CD8-positive, alpha-beta T cell (primary cell): ENCODE measurements at regions of chr19 and their contacts with region 1.

Region 1: DNA sequence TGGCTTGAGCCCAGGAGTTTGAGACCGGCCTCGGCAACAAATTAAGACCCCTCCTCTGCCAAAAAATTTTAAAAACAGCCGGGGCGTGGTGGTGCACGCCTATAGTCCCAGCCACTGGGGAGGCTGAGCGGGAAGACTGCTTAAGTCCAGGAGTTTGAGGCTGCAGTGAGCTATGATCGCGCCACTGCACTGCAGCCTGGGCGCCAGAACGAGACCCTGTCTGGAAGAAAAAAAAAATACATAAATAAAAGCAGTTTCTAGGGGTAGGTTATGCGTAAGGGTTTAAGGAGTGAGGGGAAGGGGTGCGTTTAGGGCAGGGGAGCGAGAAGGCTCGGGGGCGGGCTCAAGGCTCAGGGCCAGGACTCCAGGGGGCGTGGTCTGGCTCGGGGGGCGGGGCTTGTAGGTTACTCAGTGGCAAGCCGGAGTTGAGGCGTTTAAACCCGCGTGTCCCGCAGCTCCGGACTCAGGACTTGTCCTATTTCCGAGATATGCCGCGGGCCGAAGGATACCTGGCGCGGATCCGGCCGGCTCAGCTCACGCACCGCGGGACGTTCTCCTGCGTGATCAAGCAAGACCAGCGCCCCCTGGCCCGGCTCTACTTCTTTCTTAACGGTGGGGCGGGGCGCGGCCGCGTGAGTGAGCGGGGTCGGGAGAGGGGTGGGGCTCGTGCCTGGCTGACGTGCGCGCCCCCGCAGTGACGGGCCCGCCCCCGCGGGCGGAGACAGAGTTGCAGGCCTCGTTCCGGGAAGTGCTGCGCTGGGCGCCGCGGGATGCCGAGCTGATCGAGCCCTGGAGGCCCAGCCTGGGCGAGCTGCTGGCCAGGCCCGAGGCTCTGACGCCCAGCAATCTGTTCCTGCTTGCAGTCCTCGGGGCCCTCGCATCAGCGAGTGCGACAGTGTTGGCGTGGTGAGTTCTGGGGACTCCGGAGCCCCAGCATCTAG is 10.7 kb downstream of the SPACA6 start:
- DNase-seq: peak; percentile 91 to 99 (median 97)
- ATAC-seq: peak; percentile 91
- H3K4me3 ChIP-seq: peak overlapping the region; percentile 89 to 98
- H3K4me3 Mint-ChIP-seq: peak overlapping the region; percentile 89
- H3K27ac ChIP-seq: peak overlapping the region; percentile 88 to 92
- H3K27ac Mint-ChIP-seq: peak overlapping the region; percentile 89
- H3K4me1 ChIP-seq: peaks cover 25% of the 10 kb centered on the region
- H3K4me1 Mint-ChIP-seq: peaks cover 35% of the 10 kb centered on the region
- H3K27me3 ChIP-seq: no peaks in the 10 kb centered on the region
- H3K27me3 Mint-ChIP-seq: no peaks in the 10 kb centered on the region
- CTCF ChIP-seq: peak; percentile 56

Region 2: DNA sequence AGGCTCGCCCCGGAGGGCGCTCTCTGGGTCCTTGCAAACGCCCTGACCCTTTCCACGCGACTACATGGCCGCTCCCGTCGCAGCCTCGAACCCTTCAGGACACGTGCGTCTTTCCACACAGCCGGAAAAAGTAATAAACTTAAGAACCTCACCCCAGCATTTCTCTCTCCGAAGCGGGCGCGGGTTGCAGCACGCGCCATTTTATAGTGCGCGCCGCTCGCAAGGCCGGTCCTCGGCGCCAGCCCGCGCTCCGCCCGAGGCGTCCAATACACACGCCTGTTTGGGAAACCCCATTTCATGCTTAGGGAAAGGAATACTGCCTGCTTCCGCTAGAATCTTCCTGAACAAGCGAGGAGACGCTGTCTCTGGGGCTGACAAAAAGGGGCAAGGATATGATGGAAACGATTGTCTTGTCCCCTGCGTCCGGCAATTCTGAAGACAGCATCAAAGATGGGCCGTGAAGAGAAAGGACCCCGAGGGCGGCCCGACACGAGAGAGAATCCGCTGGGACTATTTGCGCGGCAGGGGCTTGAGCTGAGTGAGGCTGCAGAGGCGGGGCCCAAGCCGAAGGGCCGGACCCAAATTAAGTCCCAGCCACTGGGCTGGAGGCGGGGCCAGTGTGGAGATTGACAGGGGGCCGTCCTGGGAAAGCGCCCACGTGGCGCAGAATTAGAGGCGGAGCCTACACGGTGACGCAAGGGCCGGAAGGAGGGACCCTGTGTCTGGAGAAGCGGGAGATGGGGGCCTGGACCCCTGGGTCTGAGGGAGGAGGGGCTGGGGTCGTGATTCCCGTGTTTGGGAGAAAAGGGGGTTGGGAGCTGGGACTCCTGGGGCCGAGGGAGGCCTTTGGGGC is 899.2 kb before region 1 on chr19:
- CTCF ChIA-PET with region 1: no interaction called
- POLR2A ChIA-PET with region 1: no interaction called
- intact Hi-C with region 1: loop called in 1 of 2 experiments (anchors 10 kb)
- DNase-seq: peak; percentile 91 to 99 (median 96)
- ATAC-seq: peak; percentile 95
- H3K4me3 ChIP-seq: peak overlapping the region; percentile 91 to 96
- H3K4me3 Mint-ChIP-seq: peak overlapping the region; percentile 98
- H3K27ac ChIP-seq: peak overlapping the region; percentile 99
- H3K27ac Mint-ChIP-seq: peak overlapping the region; percentile 100
- H3K4me1 ChIP-seq: peaks cover 18% of the 10 kb centered on the region
- H3K4me1 Mint-ChIP-seq: peaks cover 43% of the 10 kb centered on the region
- H3K27me3 ChIP-seq: no peaks in the 10 kb centered on the region
- H3K27me3 Mint-ChIP-seq: no peaks in the 10 kb centered on the region
- CTCF ChIP-seq: no peak

Region 3: GRCh38 chr19:51570962-51571575 is 132.8 kb before region 1 on chr19 and contains the start of gene ZNF175:
- CTCF ChIA-PET with region 1: no interaction called
- POLR2A ChIA-PET with region 1: no interaction called
- intact Hi-C with region 1: loop called (anchors 1 to 5 kb)
- DNase-seq: peak; percentile 70 to 94 (median 87)
- ATAC-seq: peak; percentile 98
- H3K4me3 ChIP-seq: peak within 1 kb of the TSS; percentile 65 to 80
- H3K4me3 Mint-ChIP-seq: peak within 1 kb of the TSS; percentile 97
- H3K27ac ChIP-seq: no peak within 1 kb of the TSS
- H3K27ac Mint-ChIP-seq: peak within 1 kb of the TSS; percentile 85
- H3K4me1 ChIP-seq: peaks cover 19% of the 10 kb centered on the region
- H3K4me1 Mint-ChIP-seq: peaks cover 41% of the 10 kb centered on the region
- H3K27me3 ChIP-seq: no peaks in the 10 kb centered on the region
- H3K27me3 Mint-ChIP-seq: peaks cover 4% of the 10 kb centered on the region
- CTCF ChIP-seq: no peak
- total RNA-seq, gene ZNF175: 0.84 to 1.4 TPM

Region 4: GRCh38 chr19:51660975-51661600 is 42.8 kb before region 1 on chr19:
- CTCF ChIA-PET with region 1: interaction called, 4 read pairs
- POLR2A ChIA-PET with region 1: no interaction called
- intact Hi-C with region 1: loop called in 1 of 2 experiments (anchors 1 kb)
- DNase-seq: peak in 5 of 9 experiments; percentile 41 to 54 (median 53)
- ATAC-seq: no peak
- H3K4me3 ChIP-seq: no peak overlapping the region
- H3K4me3 Mint-ChIP-seq: no peak overlapping the region
- H3K27ac ChIP-seq: no peak overlapping the region
- H3K27ac Mint-ChIP-seq: no peak overlapping the region
- H3K4me1 ChIP-seq: peaks cover 3% of the 10 kb centered on the region
- H3K4me1 Mint-ChIP-seq: peaks cover 5% of the 10 kb centered on the region
- H3K27me3 ChIP-seq: peaks cover 0 to 6% of the 10 kb centered on the region in 2 experiments
- H3K27me3 Mint-ChIP-seq: peaks cover 35% of the 10 kb centered on the region
- CTCF ChIP-seq: peak; percentile 17

Region 5: DNA sequence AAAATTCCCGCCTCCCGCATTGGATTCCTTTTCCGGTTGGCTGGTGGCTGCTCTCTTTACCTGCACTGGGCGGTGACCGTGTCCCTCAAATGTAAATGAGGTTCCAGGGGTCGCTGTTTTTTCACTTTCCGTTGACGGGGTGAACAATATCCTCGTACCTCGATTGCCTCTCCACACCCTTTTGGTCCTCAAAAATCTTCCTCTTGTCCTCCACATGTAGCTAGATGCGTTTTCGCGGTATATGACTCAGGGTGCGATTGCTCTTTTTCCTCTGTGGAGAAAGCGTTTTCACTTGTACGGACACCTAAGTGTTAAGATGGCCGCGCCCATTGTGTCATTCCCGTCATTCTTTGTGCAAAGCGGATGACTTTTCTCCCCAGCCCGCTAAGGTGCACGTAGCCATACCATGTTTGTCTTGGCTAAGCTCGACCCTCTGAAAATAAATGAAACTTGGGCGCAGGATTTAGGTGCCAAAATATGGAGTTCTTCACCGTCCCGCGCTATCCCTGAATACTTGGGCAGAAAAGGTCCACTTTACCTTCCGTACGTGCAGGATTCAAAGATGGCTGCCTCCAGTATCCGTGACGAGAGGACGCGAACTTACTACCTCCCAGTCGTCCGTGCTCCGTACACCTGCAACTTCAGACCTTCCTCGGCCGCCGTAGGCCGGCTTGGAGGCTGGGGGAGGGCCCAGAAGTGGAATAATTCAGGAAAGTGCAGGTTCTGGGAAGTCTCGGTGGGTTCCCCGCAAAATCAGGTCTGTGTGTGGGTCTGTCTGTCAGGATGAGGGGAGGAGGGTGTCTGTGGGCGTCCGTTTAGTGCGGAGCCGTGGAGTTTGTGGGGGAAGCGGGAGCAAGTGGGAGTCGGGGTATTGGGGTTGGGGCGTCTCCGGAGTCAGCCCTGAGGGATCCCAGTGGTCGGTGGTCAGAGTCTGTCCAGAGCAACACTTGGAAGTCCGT is 223.2 kb after region 1 on chr19 and contains the start of gene ZNF613:
- CTCF ChIA-PET with region 1: no interaction called
- POLR2A ChIA-PET with region 1: no interaction called
- intact Hi-C with region 1: loop called (anchors 2 to 5 kb)
- DNase-seq: peak; percentile 63 to 92 (median 85)
- ATAC-seq: peak; percentile 86
- H3K4me3 ChIP-seq: peak within 1 kb of the TSS; percentile 88 to 95
- H3K4me3 Mint-ChIP-seq: peak within 1 kb of the TSS; percentile 95
- H3K27ac ChIP-seq: peak within 1 kb of the TSS; percentile 55 to 65
- H3K27ac Mint-ChIP-seq: peak within 1 kb of the TSS; percentile 91
- H3K4me1 ChIP-seq: peaks cover 7% of the 10 kb centered on the region
- H3K4me1 Mint-ChIP-seq: peaks cover 23% of the 10 kb centered on the region
- H3K27me3 ChIP-seq: no peaks in the 10 kb centered on the region
- H3K27me3 Mint-ChIP-seq: no peaks in the 10 kb centered on the region
- CTCF ChIP-seq: no peak
- total RNA-seq, gene ZNF613: 0.58 to 1.1 TPM

Region 6: DNA sequence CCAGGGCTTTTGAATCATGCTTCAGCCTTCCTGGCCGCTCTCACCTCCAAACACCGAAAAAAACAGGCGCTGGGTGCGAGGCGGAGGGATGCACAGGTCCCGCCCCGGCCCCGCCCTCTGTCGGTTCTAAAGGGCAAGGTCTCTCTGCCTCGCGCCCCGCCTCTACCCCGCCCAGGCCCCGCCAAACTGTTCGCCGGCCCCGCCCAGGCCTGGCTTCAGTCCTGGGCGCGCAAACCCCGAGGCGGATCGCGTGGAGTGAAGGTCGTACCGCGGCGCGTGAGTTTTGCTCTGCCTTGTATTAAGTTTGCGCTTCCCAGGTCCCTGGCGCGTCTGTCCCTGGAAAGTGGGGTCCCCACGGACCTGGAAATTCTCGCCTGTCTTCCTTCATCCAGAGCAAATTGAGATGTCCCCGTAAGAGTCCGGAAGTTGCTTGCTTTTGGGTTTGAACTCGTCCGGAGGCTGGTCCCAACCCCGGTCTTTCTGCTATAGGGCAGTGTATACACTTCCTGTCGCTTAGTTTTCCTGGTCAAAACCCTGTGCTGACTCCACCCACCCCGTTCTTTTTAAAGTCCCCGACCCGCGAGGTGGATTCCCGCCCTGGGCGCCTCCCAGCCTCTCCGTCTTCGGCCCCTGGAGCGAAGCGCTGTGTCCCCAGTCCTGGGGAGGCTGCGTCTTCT is 832.1 kb after region 1 on chr19:
- CTCF ChIA-PET with region 1: no interaction called
- POLR2A ChIA-PET with region 1: no interaction called
- intact Hi-C with region 1: no loop called
- DNase-seq: peak; percentile 76 to 94 (median 92)
- ATAC-seq: peak; percentile 98
- H3K4me3 ChIP-seq: peak overlapping the region; percentile 65 to 90
- H3K4me3 Mint-ChIP-seq: peak overlapping the region; percentile 96
- H3K27ac ChIP-seq: peak overlapping the region; percentile 62 to 85
- H3K27ac Mint-ChIP-seq: peak overlapping the region; percentile 95
- H3K4me1 ChIP-seq: peaks cover 10% of the 10 kb centered on the region
- H3K4me1 Mint-ChIP-seq: peaks cover 48% of the 10 kb centered on the region
- H3K27me3 ChIP-seq: no peaks in the 10 kb centered on the region
- H3K27me3 Mint-ChIP-seq: no peaks in the 10 kb centered on the region
- CTCF ChIP-seq: peak; percentile 19